ENCODE measurements at regions of chrX and their contacts with region 1.

Region 1: GRCh38 chrX:14039344-14039743 is 9.7 kb upstream of the GEMIN8 start:
- DNase-seq: no peak
- ATAC-seq: peak; percentile 54 to 76 (median 65)
- H3K4me3 ChIP-seq: no peak overlapping the region
- H3K27ac ChIP-seq: no peak overlapping the region
- H3K4me1 ChIP-seq: no peaks in the 10 kb centered on the region
- H3K27me3 ChIP-seq: peaks cover 0 to 19% (median 0%) of the 10 kb centered on the region in 3 donors
- CTCF ChIP-seq: peak; percentile 77

Region 2: GRCh38 chrX:15143050-15143824 is 1103.9 kb after region 1 on chrX:
- intact Hi-C with region 1: loop called in 1 of 2 experiments (anchors 2 kb)
- DNase-seq: no peak
- ATAC-seq: peak in 1 of 4 donors; percentile 53
- H3K4me3 ChIP-seq: no peak overlapping the region
- H3K27ac ChIP-seq: no peak overlapping the region
- H3K4me1 ChIP-seq: no peaks in the 10 kb centered on the region
- H3K27me3 ChIP-seq: peaks cover 0 to 5% (median 0%) of the 10 kb centered on the region in 3 donors
- CTCF ChIP-seq: peak; percentile 63

Region 3: GRCh38 chrX:15242899-15243555 is 1203.7 kb after region 1 on chrX:
- intact Hi-C with region 1: loop called (anchors 5 kb)
- DNase-seq: no peak
- ATAC-seq: no peak
- H3K4me3 ChIP-seq: no peak overlapping the region
- H3K27ac ChIP-seq: no peak overlapping the region
- H3K4me1 ChIP-seq: no peaks in the 10 kb centered on the region
- H3K27me3 ChIP-seq: peaks cover 0 to 3% (median 0%) of the 10 kb centered on the region in 3 donors
- CTCF ChIP-seq: peak; percentile 59